ENCODE measurements at regions of chr19 and their contacts with region 1.

Region 1: GRCh38 chr19:56848166-56848565 is 7.6 kb upstream of the PEG3 start:
- DNase-seq: no peak
- H3K4me3 ChIP-seq: no peak overlapping the region
- H3K27ac ChIP-seq: no peak overlapping the region
- H3K4me1 ChIP-seq: no peaks in the 10 kb centered on the region
- H3K27me3 ChIP-seq: no peaks in the 10 kb centered on the region
- CTCF ChIP-seq: no peak
- EP300 ChIP-seq: no peak
- POLR2A ChIP-seq: no peak

Region 2: DNA sequence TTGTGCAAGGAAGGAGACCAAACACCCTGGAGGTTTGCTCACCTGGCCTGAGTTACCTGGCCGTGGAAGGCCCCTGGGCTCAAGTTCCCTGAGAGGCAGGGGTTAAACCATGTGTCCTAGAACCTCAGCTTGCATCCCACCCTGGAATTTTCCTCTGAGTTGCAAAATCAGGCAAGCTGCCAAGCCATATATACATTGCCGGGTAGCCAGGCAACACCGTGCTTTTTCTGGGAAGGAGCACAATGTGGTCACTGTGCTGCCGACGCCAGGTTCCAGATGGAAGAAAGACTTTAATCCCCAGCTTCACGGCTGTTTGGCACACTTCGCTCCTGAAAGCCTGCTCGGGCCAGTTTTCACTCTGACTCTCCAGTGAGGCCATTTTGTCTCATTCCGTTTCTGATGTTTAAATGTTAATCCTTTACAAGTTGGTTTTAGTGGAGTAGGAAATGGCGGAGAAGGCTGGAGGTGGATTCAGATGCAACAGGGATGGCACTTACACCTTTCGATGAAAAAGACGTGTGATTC is 52.5 kb after region 1 on chr19:
- intact Hi-C with region 1: loop called in 1 of 4 experiments (anchors 1 kb)
- DNase-seq: no peak
- H3K4me3 ChIP-seq: no peak overlapping the region
- H3K27ac ChIP-seq: no peak overlapping the region
- H3K4me1 ChIP-seq: peaks cover 1% of the 10 kb centered on the region
- H3K27me3 ChIP-seq: no peaks in the 10 kb centered on the region
- CTCF ChIP-seq: no peak
- EP300 ChIP-seq: no peak
- POLR2A ChIP-seq: no peak

Measured in ovary (tissue), 10 donors.